Psoas muscle (tissue), 8 donors: ENCODE measurements at regions of chr6 and their contacts with region 1.

Region 1: GRCh38 chr6:25085756-25086155 is 150.0 kb upstream of the RIPOR2 start:
- DNase-seq: no peak
- ATAC-seq: no peak
- H3K4me3 ChIP-seq: no peak overlapping the region
- H3K27ac ChIP-seq: no peak overlapping the region
- H3K4me1 ChIP-seq: no peaks in the 10 kb centered on the region
- H3K27me3 ChIP-seq: peaks cover 0 to 2% (median 0%) of the 10 kb centered on the region in 3 donors
- CTCF ChIP-seq: no peak

Region 2: GRCh38 chr6:25981568-25982263 is 896.0 kb after region 1 on chr6:
- intact Hi-C with region 1: loop called in 1 of 2 experiments (anchors 10 kb)
- DNase-seq: no peak
- ATAC-seq: no peak
- H3K4me3 ChIP-seq: no peak overlapping the region
- H3K27ac ChIP-seq: no peak overlapping the region
- H3K4me1 ChIP-seq: no peaks in the 10 kb centered on the region
- H3K27me3 ChIP-seq: no peaks in the 10 kb centered on the region
- CTCF ChIP-seq: no peak